ENCODE measurements at regions of chr12 and their contacts with region 1.

Region 1: GRCh38 chr12:113196996-113197395 is 11.5 kb downstream of the RITA1 start:
- DNase-seq: peak in 4 of 5 donors; percentile 65 to 76 (median 74)
- ATAC-seq: peak; percentile 85 to 89 (median 85)
- H3K4me3 ChIP-seq: no peak overlapping the region
- H3K27ac ChIP-seq: no peak overlapping the region
- H3K4me1 ChIP-seq: peaks cover 0 to 44% (median 16%) of the 10 kb centered on the region in 12 donors
- H3K27me3 ChIP-seq: no peaks in the 10 kb centered on the region
- CTCF ChIP-seq: peak; percentile 61 to 82 (median 73)
- POLR2A ChIP-seq: no peak

Region 2: DNA sequence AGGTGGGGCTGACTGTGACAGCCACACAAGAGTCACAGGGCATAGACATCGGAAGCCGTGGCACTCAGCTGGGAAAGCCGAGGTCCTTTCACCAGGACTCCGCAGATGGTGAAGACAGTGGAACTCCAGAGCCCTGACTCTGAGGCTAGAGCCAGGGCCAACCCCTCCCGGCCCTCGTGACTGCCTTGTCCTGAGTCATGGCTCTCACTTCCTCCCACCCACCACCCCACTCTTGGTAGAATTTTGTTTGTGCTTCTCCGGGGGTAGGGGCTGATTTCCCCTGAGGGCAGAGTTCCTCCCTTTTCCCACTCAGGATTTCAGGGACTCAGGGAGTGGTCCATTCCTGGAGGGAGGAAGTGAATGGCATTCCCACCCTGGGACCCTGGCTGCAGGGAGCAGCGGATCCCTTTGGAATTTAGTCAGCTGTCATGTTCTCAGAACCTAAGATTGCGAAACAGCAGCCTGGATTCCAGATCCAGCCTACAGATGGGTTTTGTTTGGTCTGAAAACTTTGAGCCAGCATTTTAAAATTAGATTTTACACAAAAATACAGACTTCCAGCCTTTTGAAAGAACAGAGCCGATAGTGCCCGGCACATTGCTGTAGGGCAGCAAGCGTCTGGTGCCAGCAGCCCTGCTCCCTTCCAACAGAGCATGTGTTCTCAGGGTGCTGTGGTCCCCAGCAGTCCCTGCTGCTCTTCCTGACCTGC is 75.0 kb after region 1 on chr12:
- intact Hi-C with region 1: loop called in 2 of 10 experiments (anchors 5 kb)
- DNase-seq: peak; percentile 79 to 92 (median 86)
- ATAC-seq: peak; percentile 74 to 92 (median 89)
- H3K4me3 ChIP-seq: peak overlapping the region in 4 of 12 donors; percentile 2 to 22 (median 6)
- H3K27ac ChIP-seq: peak overlapping the region; percentile 69 to 94 (median 85)
- H3K4me1 ChIP-seq: peaks cover 6 to 52% (median 30%) of the 10 kb centered on the region in 12 donors
- H3K27me3 ChIP-seq: no peaks in the 10 kb centered on the region
- CTCF ChIP-seq: no peak
- POLR2A ChIP-seq: peak in 1 of 2 donors; percentile 22

Region 3: DNA sequence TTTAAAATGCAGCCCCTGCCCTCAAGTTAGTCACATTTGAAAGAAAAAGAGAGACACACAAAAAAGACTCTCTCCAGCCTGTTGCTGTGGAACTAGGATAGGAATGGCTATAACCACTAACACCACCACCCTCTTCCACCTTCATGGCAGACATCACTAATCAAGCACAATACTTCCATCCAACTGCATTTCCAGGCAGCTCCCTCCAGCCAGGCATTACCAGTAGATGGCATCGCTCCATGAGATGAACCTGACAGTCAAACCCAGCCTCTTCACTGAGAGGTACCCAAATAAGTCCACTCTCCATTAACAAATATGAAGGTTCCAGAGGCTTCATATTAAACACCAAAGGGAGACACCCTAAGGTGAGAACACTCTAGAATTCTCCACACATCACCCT is 113.5 kb after region 1 on chr12:
- intact Hi-C with region 1: loop called in 2 of 10 experiments (anchors 5 to 10 kb)
- DNase-seq: no peak
- ATAC-seq: no peak
- H3K4me3 ChIP-seq: no peak overlapping the region
- H3K27ac ChIP-seq: no peak overlapping the region
- H3K4me1 ChIP-seq: peaks cover 0 to 4% (median 0%) of the 10 kb centered on the region in 12 donors
- H3K27me3 ChIP-seq: no peaks in the 10 kb centered on the region
- CTCF ChIP-seq: no peak
- POLR2A ChIP-seq: no peak

Region 4: GRCh38 chr12:113358381-113359132 is 161.6 kb after region 1 on chr12 and contains the start of gene PLBD2:
- intact Hi-C with region 1: loop called in 1 of 10 experiments (anchors 2 kb)
- DNase-seq: peak; percentile 95 to 97 (median 95)
- ATAC-seq: peak; percentile 96 to 98 (median 96)
- H3K4me3 ChIP-seq: peak within 1 kb of the TSS; percentile 47 to 94 (median 78)
- H3K27ac ChIP-seq: peak within 1 kb of the TSS; percentile 47 to 93 (median 86)
- H3K4me1 ChIP-seq: peaks cover 0 to 38% (median 10%) of the 10 kb centered on the region in 12 donors
- H3K27me3 ChIP-seq: no peaks in the 10 kb centered on the region
- CTCF ChIP-seq: no peak
- POLR2A ChIP-seq: peak in 1 of 2 donors; percentile 81
- total RNA-seq, gene PLBD2: 28.8 to 66.6 (median 33.6) TPM

Region 5: GRCh38 chr12:113912760-113913329 is 715.8 kb after region 1 on chr12:
- intact Hi-C with region 1: loop called in 1 of 10 experiments (anchors 10 kb)
- DNase-seq: peak in 4 of 5 donors; percentile 46 to 59 (median 52)
- ATAC-seq: peak in 3 of 4 donors; percentile 59 to 81 (median 74)
- H3K4me3 ChIP-seq: no peak overlapping the region
- H3K27ac ChIP-seq: no peak overlapping the region
- H3K4me1 ChIP-seq: no peaks in the 10 kb centered on the region
- H3K27me3 ChIP-seq: no peaks in the 10 kb centered on the region
- CTCF ChIP-seq: peak; percentile 59 to 88 (median 82)
- POLR2A ChIP-seq: no peak